PC-3 (cell line): ENCODE measurements at regions of chr6 and their contacts with region 1.

Region 1: DNA sequence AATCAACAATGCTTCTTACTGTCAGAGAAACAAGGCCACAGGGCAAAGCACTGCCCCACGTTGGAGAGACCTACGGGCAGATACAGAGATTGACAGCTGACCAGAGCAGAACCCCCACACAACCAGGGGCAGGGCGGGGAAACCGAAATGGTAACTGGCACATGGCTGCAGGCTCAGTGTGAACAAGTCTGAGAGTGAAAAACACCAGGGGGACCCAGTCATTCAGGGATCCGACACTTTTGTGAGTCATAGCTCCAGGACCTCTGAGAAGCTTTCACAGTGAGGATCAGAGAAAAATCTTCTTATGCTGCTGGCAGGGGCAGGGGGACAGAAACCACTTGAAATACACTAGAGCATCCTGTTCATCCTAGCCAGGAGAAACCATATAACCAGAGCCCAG is 254.2 kb downstream of the C6orf118 start:
- DNase-seq: peak; percentile 68
- ATAC-seq: peak; percentile 67
- H3K4me3 ChIP-seq: no peak overlapping the region
- H3K27ac ChIP-seq: no peak overlapping the region
- H3K4me1 ChIP-seq: peaks cover 21% of the 10 kb centered on the region
- H3K27me3 ChIP-seq: no peaks in the 10 kb centered on the region
- CTCF ChIP-seq: peak; percentile 56

Region 2: GRCh38 chr6:164370773-164371172 is 684.5 kb before region 1 on chr6:
- CTCF ChIA-PET with region 1: no interaction called
- POLR2A ChIA-PET with region 1: no interaction called
- intact Hi-C with region 1: no loop called
- DNase-seq: peak; percentile 32
- ATAC-seq: no peak
- H3K4me3 ChIP-seq: no peak overlapping the region
- H3K27ac ChIP-seq: no peak overlapping the region
- H3K4me1 ChIP-seq: no peaks in the 10 kb centered on the region
- H3K27me3 ChIP-seq: no peaks in the 10 kb centered on the region
- CTCF ChIP-seq: no peak

Region 3: DNA sequence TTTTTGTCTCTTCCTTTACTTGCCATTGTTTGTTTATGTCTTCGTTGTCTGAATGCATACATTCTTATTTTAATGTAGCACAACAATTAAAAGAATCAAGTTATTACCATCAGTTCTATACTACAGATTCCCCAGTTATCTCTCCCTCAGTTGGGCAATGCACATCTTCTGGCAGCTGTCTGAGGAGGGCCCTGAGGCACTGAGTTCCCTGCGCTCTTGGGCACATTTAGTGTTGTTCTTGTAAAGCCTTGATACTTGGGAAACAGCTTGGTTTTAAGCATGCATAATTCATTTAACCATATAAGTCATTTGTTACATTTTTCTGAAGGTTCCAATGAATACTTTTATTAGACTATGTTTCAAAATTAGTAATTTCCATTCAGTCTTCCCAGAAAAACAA is 136.2 kb after region 1 on chr6:
- CTCF ChIA-PET with region 1: no interaction called
- POLR2A ChIA-PET with region 1: no interaction called
- intact Hi-C with region 1: loop called (anchors 1 kb)
- DNase-seq: no peak
- ATAC-seq: no peak
- H3K4me3 ChIP-seq: no peak overlapping the region
- H3K27ac ChIP-seq: no peak overlapping the region
- H3K4me1 ChIP-seq: no peaks in the 10 kb centered on the region
- H3K27me3 ChIP-seq: no peaks in the 10 kb centered on the region
- CTCF ChIP-seq: no peak

Region 4: GRCh38 chr6:165231581-165232561 is 176.6 kb after region 1 on chr6:
- CTCF ChIA-PET with region 1: interaction called, 4 read pairs
- POLR2A ChIA-PET with region 1: no interaction called
- intact Hi-C with region 1: loop called (anchors 1 kb)
- DNase-seq: peak; percentile 62
- ATAC-seq: no peak; the same call in 1 of the 2 replicates
- H3K4me3 ChIP-seq: no peak overlapping the region
- H3K27ac ChIP-seq: no peak overlapping the region
- H3K4me1 ChIP-seq: peaks cover 10% of the 10 kb centered on the region
- H3K27me3 ChIP-seq: no peaks in the 10 kb centered on the region
- CTCF ChIP-seq: peak; percentile 76

Region 5: DNA sequence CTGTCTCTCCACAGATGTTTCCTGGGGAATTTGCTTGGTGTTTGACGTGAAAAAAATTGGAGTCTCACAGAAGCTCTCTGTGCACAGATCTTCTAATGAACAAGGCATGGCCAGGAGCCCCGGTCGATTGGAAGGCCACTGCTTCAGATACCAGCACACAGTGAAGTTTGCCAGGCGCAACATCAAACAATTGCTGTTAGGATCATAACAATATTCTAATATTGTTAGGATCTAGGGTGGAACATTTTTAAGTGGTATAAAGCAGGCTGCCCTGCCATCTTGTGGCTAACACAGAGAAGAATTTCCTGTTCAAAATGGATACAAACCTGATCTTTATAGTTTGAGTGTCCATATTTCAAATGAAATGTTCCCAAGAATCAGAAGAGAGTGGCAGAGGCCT is 190.1 kb after region 1 on chr6:
- CTCF ChIA-PET with region 1: no interaction called
- POLR2A ChIA-PET with region 1: no interaction called
- intact Hi-C with region 1: loop called (anchors 1 kb)
- DNase-seq: peak; percentile 31
- ATAC-seq: peak; percentile 29; the same call in 1 of the 2 replicates
- H3K4me3 ChIP-seq: no peak overlapping the region
- H3K27ac ChIP-seq: no peak overlapping the region
- H3K4me1 ChIP-seq: no peaks in the 10 kb centered on the region; the same call in 1 of the 2 replicates
- H3K27me3 ChIP-seq: no peaks in the 10 kb centered on the region
- CTCF ChIP-seq: peak; percentile 57